CD8-positive, alpha-beta T cell (primary cell): ENCODE measurements at regions of chrX and their contacts with region 1.

Region 1: GRCh38 chrX:134963041-134963440 is 27.8 kb upstream of the SMIM10 start:
- DNase-seq: no peak
- ATAC-seq: no peak
- H3K4me3 ChIP-seq: no peak overlapping the region
- H3K4me3 Mint-ChIP-seq: no peak overlapping the region
- H3K27ac ChIP-seq: no peak overlapping the region
- H3K27ac Mint-ChIP-seq: no peak overlapping the region
- H3K4me1 ChIP-seq: no peaks in the 10 kb centered on the region
- H3K4me1 Mint-ChIP-seq: no peaks in the 10 kb centered on the region
- H3K27me3 ChIP-seq: no peaks in the 10 kb centered on the region
- H3K27me3 Mint-ChIP-seq: peaks cover 14% of the 10 kb centered on the region
- CTCF ChIP-seq: no peak

Region 2: GRCh38 chrX:135086197-135086854 is 123.3 kb after region 1 on chrX:
- CTCF ChIA-PET with region 1: interaction called, 38 read pairs
- POLR2A ChIA-PET with region 1: no interaction called
- intact Hi-C with region 1: loop called in 1 of 2 experiments (anchors 1 kb)
- DNase-seq: peak in 6 of 9 experiments; percentile 11 to 79 (median 42)
- ATAC-seq: peak; percentile 99
- H3K4me3 ChIP-seq: no peak overlapping the region
- H3K4me3 Mint-ChIP-seq: no peak overlapping the region
- H3K27ac ChIP-seq: no peak overlapping the region
- H3K27ac Mint-ChIP-seq: no peak overlapping the region
- H3K4me1 ChIP-seq: no peaks in the 10 kb centered on the region
- H3K4me1 Mint-ChIP-seq: peaks cover 5% of the 10 kb centered on the region
- H3K27me3 ChIP-seq: no peaks in the 10 kb centered on the region
- H3K27me3 Mint-ChIP-seq: peaks cover 3% of the 10 kb centered on the region
- CTCF ChIP-seq: peak; percentile 60